ENCODE measurements at regions of chr10 and their contacts with region 1.

Region 1: DNA sequence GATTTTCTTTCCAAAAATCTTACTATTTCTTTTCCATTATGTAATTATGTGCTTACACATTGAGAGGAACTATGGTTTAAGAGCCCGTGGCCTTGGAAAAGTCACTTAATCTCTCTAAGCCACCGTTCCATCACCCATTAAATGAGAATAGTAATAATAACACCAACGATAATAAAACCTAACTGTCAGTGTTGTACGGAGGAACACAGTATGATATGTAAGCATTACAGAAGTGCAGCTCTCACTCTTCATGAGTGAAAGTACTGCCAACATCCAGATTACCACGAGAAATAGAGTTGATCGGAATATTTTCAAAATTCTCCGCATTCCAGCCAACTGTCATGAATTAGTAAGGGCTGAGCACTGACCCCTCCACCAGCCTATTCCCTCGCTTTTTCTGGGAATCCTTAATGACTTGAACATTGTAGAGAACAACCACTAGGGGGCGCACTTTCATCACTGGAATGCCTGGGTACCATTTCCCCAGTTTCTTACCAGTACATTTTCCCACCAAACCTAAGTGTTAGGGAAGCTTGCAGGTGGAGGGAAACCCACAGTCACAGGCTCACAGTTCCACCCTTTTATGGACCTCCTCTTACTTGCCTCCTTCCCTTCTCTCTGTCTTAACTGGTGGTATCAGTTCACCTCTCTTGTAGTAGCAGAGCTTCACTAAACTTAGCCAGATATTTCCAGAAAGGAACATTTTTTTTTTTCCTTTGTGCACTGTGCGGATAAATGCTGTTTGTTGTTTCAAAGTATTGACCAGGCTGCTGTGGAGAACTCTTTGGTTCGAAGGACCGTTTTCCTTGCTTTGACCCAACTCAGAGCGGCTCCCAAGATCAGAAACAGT is 27.8 kb downstream of the NKX2-3 start:
- DNase-seq: peak; percentile 69
- H3K4me3 ChIP-seq: no peak overlapping the region
- H3K27ac ChIP-seq: no peak overlapping the region
- H3K4me1 ChIP-seq: no peaks in the 10 kb centered on the region
- H3K27me3 ChIP-seq: no peaks in the 10 kb centered on the region
- CTCF ChIP-seq: peak; percentile 49 to 79 (median 64)
- EP300 ChIP-seq: no peak
- POLR2A ChIP-seq: no peak

Region 2: GRCh38 chr10:99042051-99042771 is 518.3 kb before region 1 on chr10:
- intact Hi-C with region 1: no loop called
- DNase-seq: no peak
- H3K4me3 ChIP-seq: no peak overlapping the region
- H3K27ac ChIP-seq: no peak overlapping the region
- H3K4me1 ChIP-seq: no peaks in the 10 kb centered on the region
- H3K27me3 ChIP-seq: no peaks in the 10 kb centered on the region
- CTCF ChIP-seq: no peak
- EP300 ChIP-seq: no peak
- POLR2A ChIP-seq: no peak

Region 3: DNA sequence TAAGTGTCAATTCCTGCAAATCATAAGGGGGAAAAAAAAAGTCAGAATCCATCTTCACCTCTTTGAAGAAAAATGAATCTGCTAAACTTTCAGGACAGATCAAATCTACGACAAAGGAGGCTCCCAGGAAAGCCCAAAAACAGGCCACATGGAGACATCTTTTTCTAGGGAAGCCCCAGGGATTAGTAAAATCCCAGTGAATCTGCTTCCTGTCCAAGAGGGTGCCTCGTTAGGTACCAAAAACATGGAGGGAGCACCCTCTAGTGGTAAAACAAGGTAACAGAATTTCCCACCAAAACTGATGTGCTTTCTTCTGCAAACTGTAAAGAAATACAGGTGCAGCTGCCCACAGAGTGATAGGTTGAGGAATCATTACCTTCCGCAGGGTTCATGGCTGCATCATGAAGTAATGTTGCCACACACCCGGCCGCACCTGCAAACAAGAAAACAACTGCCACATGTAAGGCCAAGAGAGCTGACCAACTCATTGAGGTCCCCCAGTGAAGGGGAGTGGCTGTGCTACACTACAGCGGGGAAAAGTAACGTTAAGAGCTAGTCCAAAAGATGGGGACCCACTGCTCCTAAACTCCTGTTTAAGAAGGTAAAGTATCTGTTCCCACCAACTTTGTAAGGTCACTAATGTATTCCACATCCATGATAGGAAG is 51.8 kb after region 1 on chr10:
- intact Hi-C with region 1: loop called (anchors 5 kb)
- DNase-seq: no peak
- H3K4me3 ChIP-seq: no peak overlapping the region
- H3K27ac ChIP-seq: peak overlapping the region in 1 of 4 donors; percentile 12
- H3K4me1 ChIP-seq: peaks cover 0 to 29% (median 23%) of the 10 kb centered on the region in 4 donors
- H3K27me3 ChIP-seq: no peaks in the 10 kb centered on the region
- CTCF ChIP-seq: peak; percentile 65 to 83 (median 78)
- EP300 ChIP-seq: no peak
- POLR2A ChIP-seq: no peak

Region 4: DNA sequence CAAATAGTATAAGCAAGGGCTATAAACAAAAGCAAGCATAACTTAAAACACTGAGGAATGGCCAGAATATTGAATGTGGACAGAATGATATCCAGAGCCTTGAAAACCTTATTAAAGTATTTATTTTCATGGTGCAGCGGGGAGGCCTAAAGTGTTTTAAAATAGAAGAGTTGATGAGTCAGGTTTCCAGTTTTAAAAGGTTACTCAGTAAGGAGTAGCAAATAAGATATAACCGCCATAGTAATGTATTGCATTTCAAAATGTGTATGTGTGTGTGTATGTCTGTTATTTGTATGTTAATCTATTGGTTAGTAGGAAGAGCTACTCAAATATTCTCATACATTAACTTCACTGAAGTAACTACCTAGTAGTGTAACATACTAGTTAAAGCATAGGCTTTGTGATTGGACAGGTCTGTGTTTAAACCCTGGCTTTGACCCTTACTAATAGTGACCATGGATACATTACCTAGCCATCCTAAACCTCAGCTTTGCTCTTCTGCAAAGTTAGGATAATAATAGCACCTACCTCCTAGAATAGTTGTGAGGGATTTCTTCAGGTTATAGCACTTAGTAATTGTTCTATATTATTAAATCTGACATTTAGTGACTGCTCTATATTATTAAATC is 188.4 kb after region 1 on chr10:
- intact Hi-C with region 1: no loop called
- DNase-seq: no peak
- H3K4me3 ChIP-seq: no peak overlapping the region
- H3K27ac ChIP-seq: no peak overlapping the region
- H3K4me1 ChIP-seq: no peaks in the 10 kb centered on the region
- H3K27me3 ChIP-seq: no peaks in the 10 kb centered on the region
- CTCF ChIP-seq: no peak
- EP300 ChIP-seq: no peak
- POLR2A ChIP-seq: no peak

Region 5: GRCh38 chr10:100209303-100209702 is 648.8 kb after region 1 on chr10:
- intact Hi-C with region 1: no loop called
- DNase-seq: no peak
- H3K4me3 ChIP-seq: no peak overlapping the region
- H3K27ac ChIP-seq: no peak overlapping the region
- H3K4me1 ChIP-seq: no peaks in the 10 kb centered on the region
- H3K27me3 ChIP-seq: no peaks in the 10 kb centered on the region
- CTCF ChIP-seq: no peak
- EP300 ChIP-seq: no peak
- POLR2A ChIP-seq: no peak

Region 6: GRCh38 chr10:100481462-100482081 is 921.1 kb after region 1 on chr10:
- intact Hi-C with region 1: no loop called
- DNase-seq: peak; percentile 87
- H3K4me3 ChIP-seq: peak overlapping the region in 3 of 4 donors; percentile 40 to 51 (median 50)
- H3K27ac ChIP-seq: no peak overlapping the region
- H3K4me1 ChIP-seq: peaks cover 0 to 16% (median 15%) of the 10 kb centered on the region in 4 donors
- H3K27me3 ChIP-seq: peaks cover 6 to 44% (median 13%) of the 10 kb centered on the region in 3 donors
- CTCF ChIP-seq: no peak
- EP300 ChIP-seq: no peak
- POLR2A ChIP-seq: no peak